ENCODE measurements at regions of chr15 and their contacts with region 1.

Region 1: DNA sequence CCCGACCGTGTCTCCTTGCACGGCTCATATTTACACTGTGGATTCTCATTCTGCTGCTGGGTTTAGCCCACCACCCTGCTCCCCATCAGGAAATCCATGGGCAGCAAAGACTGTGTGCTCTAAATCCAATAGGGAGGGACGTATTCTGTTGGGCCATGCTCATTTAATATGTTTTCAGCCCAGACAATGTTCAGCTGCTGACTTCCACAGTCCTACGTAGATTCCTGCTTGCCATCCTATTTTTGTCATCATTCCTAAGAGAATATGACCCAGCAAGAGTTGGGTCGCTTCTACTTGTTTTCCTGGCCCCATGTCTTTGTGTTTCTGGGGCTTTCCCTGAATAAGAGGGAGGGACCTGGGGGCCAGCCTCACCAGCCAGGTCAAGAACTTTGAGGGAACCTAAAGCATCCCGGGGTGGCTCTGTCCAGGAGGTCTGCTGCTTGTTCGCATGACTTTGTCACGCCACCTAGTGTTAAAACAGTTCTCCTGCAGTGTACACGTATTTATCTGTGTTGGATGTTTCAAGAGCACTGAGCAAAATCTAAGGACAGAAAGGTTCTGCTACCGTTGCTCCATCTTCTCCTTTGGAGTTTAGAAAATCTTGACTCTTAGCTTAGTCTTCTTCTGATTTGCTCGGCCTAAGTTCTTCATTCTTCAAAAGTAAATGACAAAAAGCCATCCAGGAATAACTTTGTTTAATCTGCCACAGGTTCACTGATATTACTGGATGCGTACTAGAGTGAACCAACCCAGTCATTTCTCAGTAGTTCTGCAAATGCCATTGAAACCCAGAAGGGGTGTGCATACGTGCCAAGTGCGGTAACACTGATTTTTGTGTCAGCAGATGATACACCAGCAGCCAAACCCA is 79.8 kb upstream of the NR2E3 start:
- DNase-seq: peak in 1 of 2 experiments; percentile 54
- H3K4me3 ChIP-seq: no peak overlapping the region
- H3K27ac ChIP-seq: no peak overlapping the region
- H3K4me1 ChIP-seq: no peaks in the 10 kb centered on the region
- H3K27me3 ChIP-seq: no peaks in the 10 kb centered on the region
- CTCF ChIP-seq: peak; percentile 48 to 83 (median 71)
- EP300 ChIP-seq: no peak
- POLR2A ChIP-seq: no peak
- RAD21 ChIP-seq: peak; percentile 70 to 74

Region 2: DNA sequence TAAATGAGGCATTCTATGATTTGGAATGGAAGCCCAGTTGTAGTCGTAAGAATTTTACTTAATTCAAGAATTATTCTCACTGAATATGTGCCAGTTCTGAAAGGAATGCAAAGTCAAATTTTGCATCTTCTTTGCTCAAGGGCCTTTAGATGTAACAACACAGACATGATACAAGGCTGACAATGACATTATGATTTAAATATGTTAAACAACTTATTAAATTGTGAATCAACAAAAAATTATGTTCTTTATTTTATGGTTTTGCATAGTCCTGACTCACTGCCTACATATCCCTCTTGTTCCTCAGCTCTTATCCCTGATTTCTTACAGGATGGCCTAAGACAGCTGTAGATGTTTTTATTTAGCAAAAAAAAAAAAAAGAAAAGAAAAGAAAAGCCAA is 91.0 kb before region 1 on chr15:
- CTCF ChIA-PET with region 1: no interaction called
- POLR2A ChIA-PET with region 1: no interaction called
- DNase-seq: no peak
- H3K4me3 ChIP-seq: no peak overlapping the region
- H3K27ac ChIP-seq: no peak overlapping the region
- H3K4me1 ChIP-seq: peaks cover 0 to 5% (median 1%) of the 10 kb centered on the region in 4 experiments; a peak in 4 of 7 replicates
- H3K27me3 ChIP-seq: no peaks in the 10 kb centered on the region
- CTCF ChIP-seq: no peak
- EP300 ChIP-seq: no peak
- POLR2A ChIP-seq: no peak
- RAD21 ChIP-seq: no peak

Region 3: DNA sequence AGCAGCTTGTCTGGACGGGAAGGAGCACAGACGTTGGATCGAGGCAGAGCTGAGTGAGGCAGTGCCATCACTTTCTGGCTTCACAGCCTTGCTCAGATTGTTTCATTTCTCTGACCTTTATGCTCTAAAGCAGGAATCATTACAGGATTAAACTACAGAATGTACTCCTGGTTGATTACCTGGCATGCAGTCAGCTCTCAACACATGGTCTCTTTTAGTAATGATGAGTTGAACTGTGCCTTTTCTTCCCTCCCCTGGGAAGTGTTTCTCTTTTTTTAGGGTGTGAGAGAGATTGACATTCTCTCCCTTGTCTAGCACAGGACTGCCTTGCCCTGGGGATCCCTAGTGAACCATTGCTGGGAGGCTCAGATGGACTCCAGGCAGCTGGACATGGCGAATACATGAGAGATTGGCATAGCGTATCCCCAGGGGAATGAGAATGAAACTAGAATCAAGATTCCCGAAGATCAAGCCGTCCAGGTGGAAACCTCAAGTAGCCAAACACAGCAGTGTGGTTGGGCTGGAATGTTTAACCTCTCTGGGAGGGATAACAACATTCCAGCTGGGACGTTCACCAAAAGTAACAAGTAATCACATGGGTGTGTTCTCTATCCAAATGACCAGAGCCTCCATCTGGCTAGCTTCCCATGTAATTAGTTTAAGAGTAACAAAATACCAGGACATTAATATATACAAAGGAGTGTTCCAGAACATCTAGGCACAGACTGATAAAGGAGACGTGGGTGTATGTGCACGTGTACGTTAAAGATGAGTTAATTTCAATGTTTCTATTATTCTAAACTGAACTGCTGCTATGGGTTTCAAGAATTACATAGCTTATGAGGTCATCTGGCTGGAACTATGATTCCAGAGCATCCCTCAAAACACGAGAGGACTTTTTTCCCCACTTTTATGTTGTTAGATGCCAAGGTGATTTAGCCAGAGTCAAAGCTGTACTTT is 38.8 kb before region 1 on chr15:
- CTCF ChIA-PET with region 1: interaction called, 11 read pairs
- POLR2A ChIA-PET with region 1: no interaction called
- DNase-seq: no peak
- H3K4me3 ChIP-seq: no peak overlapping the region
- H3K27ac ChIP-seq: no peak overlapping the region
- H3K4me1 ChIP-seq: no peaks in the 10 kb centered on the region
- H3K27me3 ChIP-seq: no peaks in the 10 kb centered on the region; a peak in 1 of 7 replicates
- CTCF ChIP-seq: no peak
- EP300 ChIP-seq: no peak
- POLR2A ChIP-seq: no peak
- RAD21 ChIP-seq: no peak

Region 4: DNA sequence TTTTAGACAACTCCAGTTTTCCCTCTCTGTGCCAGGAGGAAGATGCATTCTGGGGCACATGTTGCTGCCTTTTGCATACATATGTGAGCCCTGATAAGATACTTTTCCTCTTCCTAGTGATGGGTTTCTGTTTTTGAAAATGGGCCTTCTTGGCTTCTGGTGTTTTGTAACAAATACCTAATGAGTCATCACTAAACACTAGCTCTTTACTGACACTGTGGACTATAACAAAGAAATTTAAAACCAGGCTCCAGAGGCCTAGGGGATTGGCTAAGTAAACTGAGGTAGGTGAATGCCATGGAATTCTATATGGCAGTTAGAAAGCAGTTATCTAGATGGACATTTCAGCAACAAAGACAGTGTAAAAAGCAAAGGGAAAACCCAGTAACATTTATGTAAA is 13.5 kb before region 1 on chr15:
- CTCF ChIA-PET with region 1: interaction called, 20 read pairs
- POLR2A ChIA-PET with region 1: no interaction called
- DNase-seq: no peak
- H3K4me3 ChIP-seq: no peak overlapping the region
- H3K27ac ChIP-seq: no peak overlapping the region
- H3K4me1 ChIP-seq: no peaks in the 10 kb centered on the region; a peak in 1 of 7 replicates
- H3K27me3 ChIP-seq: no peaks in the 10 kb centered on the region
- CTCF ChIP-seq: no peak
- EP300 ChIP-seq: no peak
- POLR2A ChIP-seq: no peak
- RAD21 ChIP-seq: no peak